Ovary (tissue), 10 donors: ENCODE measurements at regions of chr6 and their contacts with region 1.

Region 1: DNA sequence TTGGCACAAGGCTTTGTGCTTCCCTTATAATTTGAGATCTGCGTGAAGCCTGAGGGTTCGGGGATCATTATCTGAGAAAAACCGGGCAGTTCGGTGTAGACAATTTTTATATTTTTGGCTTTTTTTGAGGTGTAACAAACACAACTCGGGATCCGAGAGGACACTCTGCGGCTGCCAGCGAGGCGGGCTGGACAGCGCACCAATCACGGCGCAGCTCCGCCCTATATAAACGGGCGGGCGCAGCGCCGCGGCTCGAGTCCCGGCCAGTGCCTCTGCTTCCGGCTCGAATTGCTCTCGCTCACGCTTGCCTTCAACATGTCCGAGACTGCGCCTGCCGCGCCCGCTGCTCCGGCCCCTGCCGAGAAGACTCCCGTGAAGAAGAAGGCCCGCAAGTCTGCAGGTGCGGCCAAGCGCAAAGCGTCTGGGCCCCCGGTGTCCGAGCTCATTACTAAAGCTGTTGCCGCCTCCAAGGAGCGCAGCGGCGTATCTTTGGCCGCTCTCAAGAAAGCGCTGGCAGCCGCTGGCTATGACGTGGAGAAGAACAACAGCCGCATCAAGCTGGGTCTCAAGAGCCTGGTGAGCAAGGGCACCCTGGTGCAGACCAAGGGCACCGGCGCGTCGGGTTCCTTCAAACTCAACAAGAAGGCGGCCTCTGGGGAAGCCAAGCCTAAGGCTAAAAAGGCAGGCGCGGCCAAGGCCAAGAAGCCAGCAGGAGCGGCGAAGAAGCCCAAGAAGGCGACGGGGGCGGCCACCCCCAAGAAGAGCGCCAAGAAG is 69.0 kb downstream of the HFE start:
- DNase-seq: peak; percentile 90 to 96 (median 94)
- H3K4me3 ChIP-seq: peak overlapping the region; percentile 77
- H3K27ac ChIP-seq: peak overlapping the region; percentile 51 to 98
- H3K4me1 ChIP-seq: no peaks in the 10 kb centered on the region
- H3K27me3 ChIP-seq: no peaks in the 10 kb centered on the region
- CTCF ChIP-seq: peak in 2 of 3 donors; percentile 12 to 17
- EP300 ChIP-seq: no peak
- POLR2A ChIP-seq: peak; percentile 100

Region 2: DNA sequence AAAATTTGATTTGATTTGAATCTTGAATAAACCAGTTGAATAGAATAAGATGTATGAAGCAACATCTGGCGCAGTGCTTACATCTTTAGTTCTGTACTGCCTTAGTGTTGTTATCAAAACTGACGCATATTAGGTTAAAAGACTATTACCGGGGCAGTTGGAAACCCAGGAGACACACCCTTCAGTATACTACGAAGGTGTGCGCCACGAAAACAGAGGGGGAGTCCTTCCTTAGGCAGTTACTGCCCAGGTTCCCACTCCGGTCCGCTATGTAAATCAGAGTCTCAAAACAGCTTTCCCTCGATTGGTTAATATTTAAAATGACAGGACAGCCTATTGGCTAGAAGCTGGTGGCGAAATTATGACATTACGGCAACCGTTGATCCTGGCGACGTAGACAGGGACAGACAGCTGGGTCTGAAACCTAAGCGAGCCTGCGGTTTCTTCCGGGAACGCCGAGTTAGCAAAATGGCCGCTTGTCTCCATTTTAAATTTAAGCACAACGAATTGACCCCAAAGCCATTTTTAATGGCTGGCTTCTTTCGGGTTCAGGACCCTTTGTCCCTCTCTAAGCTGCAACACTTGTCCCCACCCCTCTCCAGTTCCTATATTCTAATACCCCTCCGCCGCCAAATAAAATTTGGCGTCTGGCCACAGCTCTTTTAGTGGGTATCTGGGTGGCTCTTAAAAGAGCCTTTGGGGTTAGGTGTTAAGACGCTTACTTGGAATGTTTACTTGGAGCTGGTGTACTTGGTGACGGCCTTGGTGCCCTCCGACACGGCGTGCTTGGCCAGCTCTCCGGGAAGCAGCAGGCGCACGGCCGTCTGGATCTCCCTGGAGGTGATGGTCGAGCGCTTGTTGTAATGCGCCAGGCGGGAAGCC is 33.2 kb before region 1 on chr6:
- intact Hi-C with region 1: loop called (anchors 1 to 2 kb)
- DNase-seq: peak; percentile 83 to 92 (median 90)
- H3K4me3 ChIP-seq: peak overlapping the region; percentile 90
- H3K27ac ChIP-seq: peak overlapping the region; percentile 0 to 93
- H3K4me1 ChIP-seq: peaks cover 3% of the 10 kb centered on the region
- H3K27me3 ChIP-seq: no peaks in the 10 kb centered on the region
- CTCF ChIP-seq: peak in 2 of 3 donors; percentile 5 to 15
- EP300 ChIP-seq: peak; percentile 90
- POLR2A ChIP-seq: peak; percentile 66

Region 3: DNA sequence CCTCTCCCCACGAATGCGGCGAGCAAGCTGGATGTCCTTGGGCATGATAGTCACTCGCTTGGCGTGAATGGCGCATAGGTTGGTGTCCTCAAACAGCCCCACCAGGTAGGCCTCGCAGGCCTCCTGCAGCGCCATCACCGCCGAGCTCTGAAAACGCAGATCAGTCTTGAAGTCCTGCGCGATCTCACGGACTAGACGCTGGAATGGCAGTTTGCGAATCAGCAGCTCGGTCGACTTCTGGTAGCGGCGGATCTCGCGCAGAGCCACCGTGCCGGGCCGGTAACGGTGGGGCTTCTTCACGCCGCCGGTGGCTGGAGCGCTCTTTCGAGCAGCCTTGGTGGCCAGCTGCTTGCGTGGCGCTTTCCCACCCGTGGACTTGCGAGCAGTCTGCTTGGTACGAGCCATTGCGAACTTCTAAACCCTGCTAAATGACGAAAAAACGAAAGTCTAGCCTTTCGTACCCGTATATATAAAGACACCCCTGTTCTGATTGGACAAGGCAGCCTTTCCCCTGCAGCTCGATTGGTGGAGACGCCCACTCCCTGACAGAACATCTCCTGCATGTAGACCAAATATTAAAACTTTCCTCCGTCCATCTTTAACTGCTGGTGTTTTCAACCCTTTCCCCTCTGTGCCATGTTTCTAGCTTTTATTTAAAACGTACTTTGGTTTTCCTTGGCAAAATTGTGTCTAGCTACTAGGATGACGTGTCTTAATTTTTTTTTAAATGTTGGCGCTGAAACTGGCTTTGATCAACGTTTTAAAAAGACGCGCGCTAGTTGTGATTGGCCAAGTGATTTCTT is 40.8 kb after region 1 on chr6:
- intact Hi-C with region 1: loop called in 1 of 4 experiments (anchors 5 kb)
- DNase-seq: peak; percentile 76 to 85 (median 81)
- H3K4me3 ChIP-seq: peak overlapping the region; percentile 55
- H3K27ac ChIP-seq: peak overlapping the region; percentile 35 to 82
- H3K4me1 ChIP-seq: no peaks in the 10 kb centered on the region
- H3K27me3 ChIP-seq: no peaks in the 10 kb centered on the region
- CTCF ChIP-seq: peak in 1 of 3 donors; percentile 23
- EP300 ChIP-seq: no peak
- POLR2A ChIP-seq: peak; percentile 93